ENCODE measurements at regions of chr1 and their contacts with region 1.

Region 1: GRCh38 chr1:225021037-225021436 is 91.6 kb downstream of the DNAH14 start:
- DNase-seq: no peak
- ATAC-seq: no peak

Region 2: DNA sequence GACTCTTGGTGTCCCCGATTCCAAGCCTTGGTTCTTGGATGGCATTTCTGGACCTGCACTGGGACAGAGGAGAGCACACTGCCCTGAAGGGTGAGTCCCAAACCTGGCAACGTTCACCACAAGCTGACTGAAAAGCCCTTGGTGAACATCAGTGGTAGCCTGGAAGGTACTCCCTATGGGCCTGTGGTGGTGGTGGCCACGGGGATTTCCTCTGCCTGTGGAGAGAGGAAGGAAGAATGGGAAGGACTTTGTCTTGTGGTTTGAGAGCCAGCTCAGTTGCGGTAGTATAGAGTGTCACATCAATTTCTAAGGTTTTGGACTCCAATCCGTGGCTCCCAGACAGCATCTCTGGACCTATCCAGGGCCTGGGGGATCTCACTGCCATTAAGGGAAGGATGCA is 40.9 kb before region 1 on chr1:
- intact Hi-C with region 1: no loop called
- DNase-seq: no peak
- ATAC-seq: no peak

Region 3: DNA sequence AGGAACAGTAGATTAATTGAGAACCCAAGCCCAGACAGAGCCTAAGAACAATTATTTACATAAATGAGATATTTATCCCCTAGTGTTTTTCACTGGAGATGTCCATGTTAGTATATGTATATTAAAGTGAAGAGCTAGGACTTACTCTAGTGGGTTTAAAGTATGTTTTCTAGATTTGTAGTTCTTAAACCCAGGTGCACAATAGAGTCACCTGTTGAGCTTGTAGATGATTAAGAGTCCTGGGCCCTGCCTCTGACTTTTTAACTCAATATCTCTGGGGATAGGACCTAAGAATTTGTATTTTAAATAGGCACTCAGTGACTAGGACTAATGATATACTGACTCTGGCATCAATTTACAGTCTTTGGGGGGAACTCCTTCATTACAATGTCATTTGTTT is 21.2 kb after region 1 on chr1:
- intact Hi-C with region 1: loop called in 1 of 2 experiments (anchors 2 kb)
- DNase-seq: no peak
- ATAC-seq: no peak

Region 4: GRCh38 chr1:225242623-225243022 is 221.6 kb after region 1 on chr1:
- intact Hi-C with region 1: no loop called
- DNase-seq: no peak
- ATAC-seq: no peak

Measured in left cardiac atrium (tissue), 4 donors.